ENCODE measurements at regions of chr10 and their contacts with region 1.

Region 1: GRCh38 chr10:3043512-3044368 is 23.6 kb upstream of the PFKP start:
- DNase-seq: peak; percentile 61
- ATAC-seq: peak; percentile 61 to 72

Region 2: GRCh38 chr10:2927958-2928840 is 115.5 kb before region 1 on chr10:
- intact Hi-C with region 1: loop called (anchors 2 to 10 kb)
- DNase-seq: peak; percentile 68
- ATAC-seq: peak; percentile 59 to 76